Activated CD4-positive, alpha-beta T cell treated with anti-CD3 and anti-CD28 coated beads for 36 hours (primary cell): ENCODE measurements at regions of chr17 and their contacts with region 1.

Region 1: DNA sequence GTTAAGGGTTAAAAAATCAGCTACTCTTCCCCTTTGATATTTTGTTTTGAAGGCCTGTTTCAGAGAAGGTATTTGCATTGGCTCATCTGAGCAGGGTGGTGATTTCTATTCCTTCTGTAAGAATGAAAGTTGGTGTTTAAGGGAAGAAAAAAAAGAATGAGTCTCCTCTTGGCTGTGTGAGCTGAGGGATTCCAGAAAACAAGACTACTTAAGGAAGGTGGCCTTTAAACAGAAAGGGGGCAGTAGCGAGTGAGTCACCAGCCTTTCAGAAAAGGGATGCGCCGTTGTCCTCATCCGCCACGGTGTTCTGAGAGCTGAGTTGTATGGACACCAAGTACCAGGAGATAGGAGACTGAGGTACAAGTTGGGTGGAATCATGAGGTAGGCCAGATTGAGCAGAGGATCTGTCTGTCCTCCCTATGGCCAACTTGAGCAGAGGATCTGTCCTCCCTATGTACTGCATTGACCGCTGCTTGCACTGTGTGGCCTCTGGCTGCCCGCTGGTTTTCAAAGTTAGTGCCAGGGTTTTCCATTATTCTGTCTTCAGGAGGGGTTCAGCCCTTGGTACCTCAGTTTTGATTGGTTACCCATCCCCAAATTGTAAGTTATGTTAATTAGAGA is 8.2 kb downstream of the PRKCA start:
- DNase-seq: peak; percentile 69
- ATAC-seq: peak; percentile 50
- H3K4me3 Mint-ChIP-seq: peak overlapping the region; percentile 5
- H3K27ac Mint-ChIP-seq: peak overlapping the region; percentile 100
- H3K4me1 Mint-ChIP-seq: peaks cover 93% of the 10 kb centered on the region
- H3K27me3 Mint-ChIP-seq: no peaks in the 10 kb centered on the region

Region 2: GRCh38 chr17:66331038-66331816 is 20.6 kb after region 1 on chr17:
- CTCF ChIA-PET with region 1: interaction called, 15 read pairs
- POLR2A ChIA-PET with region 1: interaction called, 7 read pairs
- intact Hi-C with region 1: loop called in 1 of 2 experiments (anchors 2 kb)
- DNase-seq: peak; percentile 46
- ATAC-seq: peak; percentile 74
- H3K4me3 Mint-ChIP-seq: peak overlapping the region; percentile 68
- H3K27ac Mint-ChIP-seq: peak overlapping the region; percentile 93
- H3K4me1 Mint-ChIP-seq: peaks cover 83% of the 10 kb centered on the region
- H3K27me3 Mint-ChIP-seq: no peaks in the 10 kb centered on the region

Region 3: GRCh38 chr17:66373944-66374817 is 63.5 kb after region 1 on chr17:
- CTCF ChIA-PET with region 1: interaction called, 8 read pairs
- POLR2A ChIA-PET with region 1: no interaction called
- intact Hi-C with region 1: loop called in 1 of 2 experiments (anchors 2 kb)
- DNase-seq: peak; percentile 53
- ATAC-seq: peak; percentile 59
- H3K4me3 Mint-ChIP-seq: peak overlapping the region; percentile 37
- H3K27ac Mint-ChIP-seq: peak overlapping the region; percentile 88
- H3K4me1 Mint-ChIP-seq: peaks cover 73% of the 10 kb centered on the region
- H3K27me3 Mint-ChIP-seq: no peaks in the 10 kb centered on the region

Region 4: GRCh38 chr17:66508896-66509843 is 198.5 kb after region 1 on chr17:
- CTCF ChIA-PET with region 1: no interaction called
- POLR2A ChIA-PET with region 1: interaction called, 3 read pairs
- intact Hi-C with region 1: loop called (anchors 1 to 2 kb)
- DNase-seq: peak; percentile 80
- ATAC-seq: peak; percentile 68
- H3K4me3 Mint-ChIP-seq: peak overlapping the region; percentile 49
- H3K27ac Mint-ChIP-seq: peak overlapping the region; percentile 93
- H3K4me1 Mint-ChIP-seq: peaks cover 72% of the 10 kb centered on the region
- H3K27me3 Mint-ChIP-seq: no peaks in the 10 kb centered on the region

Region 5: GRCh38 chr17:66547117-66547865 is 236.7 kb after region 1 on chr17:
- CTCF ChIA-PET with region 1: no interaction called
- POLR2A ChIA-PET with region 1: interaction called, 3 read pairs
- intact Hi-C with region 1: loop called in 1 of 2 experiments (anchors 2 kb)
- DNase-seq: no peak
- ATAC-seq: peak; percentile 80
- H3K4me3 Mint-ChIP-seq: no peak overlapping the region
- H3K27ac Mint-ChIP-seq: peak overlapping the region; percentile 81
- H3K4me1 Mint-ChIP-seq: peaks cover 63% of the 10 kb centered on the region
- H3K27me3 Mint-ChIP-seq: no peaks in the 10 kb centered on the region